Natural killer cell (primary cell): ENCODE measurements at regions of chr17 and their contacts with region 1.

Region 1: DNA sequence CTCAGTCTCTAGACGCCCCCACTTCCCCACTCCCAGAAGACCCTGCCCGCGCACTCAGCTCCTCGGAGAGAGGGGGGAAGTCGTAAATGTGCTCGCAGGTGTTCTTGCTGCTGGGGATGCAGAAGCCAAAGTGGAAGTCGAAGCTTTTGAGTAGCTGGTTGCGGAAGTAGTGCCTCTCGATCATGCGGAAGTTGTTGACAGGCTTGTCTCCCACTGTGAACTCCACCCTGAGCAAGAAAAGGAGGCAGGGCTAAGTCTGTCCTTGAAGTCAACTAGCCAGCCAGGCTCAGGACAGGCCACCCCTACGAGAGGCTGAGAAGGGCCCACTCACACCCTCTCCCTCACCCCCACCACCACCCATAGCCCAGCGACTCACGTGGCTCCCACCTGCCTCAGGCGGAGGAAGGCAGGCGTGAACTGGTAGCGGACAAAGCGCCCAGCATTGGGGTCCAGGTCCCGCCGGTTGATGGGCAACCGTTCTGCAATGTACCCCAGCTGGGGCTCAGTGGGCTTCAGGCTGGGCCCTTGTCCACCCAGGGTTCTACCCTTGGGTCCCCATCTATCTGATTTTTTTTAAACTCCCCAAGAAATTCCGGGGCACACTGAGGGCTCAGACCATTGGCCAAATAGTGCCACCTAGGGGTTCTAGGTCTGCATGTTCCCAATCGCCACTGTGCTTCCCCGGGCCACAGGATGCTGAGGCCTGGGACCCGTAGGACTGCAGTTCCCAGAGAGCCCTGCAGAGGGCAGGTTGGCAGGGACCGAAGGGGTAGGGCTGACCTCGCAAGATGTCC is 4.6 kb downstream of the UNC119 start:
- DNase-seq: peak; percentile 63 to 77
- ATAC-seq: peak; percentile 56 to 71 (median 59)
- H3K4me3 ChIP-seq: no peak overlapping the region
- H3K4me3 Mint-ChIP-seq: peak overlapping the region; percentile 81
- H3K27ac ChIP-seq: peak overlapping the region; percentile 88
- H3K27ac Mint-ChIP-seq: peak overlapping the region; percentile 87 to 93
- H3K4me1 ChIP-seq: peaks cover 54% of the 10 kb centered on the region
- H3K4me1 Mint-ChIP-seq: peaks cover 38 to 52% of the 10 kb centered on the region in 2 donors
- H3K27me3 ChIP-seq: no peaks in the 10 kb centered on the region
- H3K27me3 Mint-ChIP-seq: no peaks in the 10 kb centered on the region
- CTCF ChIP-seq: peak; percentile 77

Region 2: DNA sequence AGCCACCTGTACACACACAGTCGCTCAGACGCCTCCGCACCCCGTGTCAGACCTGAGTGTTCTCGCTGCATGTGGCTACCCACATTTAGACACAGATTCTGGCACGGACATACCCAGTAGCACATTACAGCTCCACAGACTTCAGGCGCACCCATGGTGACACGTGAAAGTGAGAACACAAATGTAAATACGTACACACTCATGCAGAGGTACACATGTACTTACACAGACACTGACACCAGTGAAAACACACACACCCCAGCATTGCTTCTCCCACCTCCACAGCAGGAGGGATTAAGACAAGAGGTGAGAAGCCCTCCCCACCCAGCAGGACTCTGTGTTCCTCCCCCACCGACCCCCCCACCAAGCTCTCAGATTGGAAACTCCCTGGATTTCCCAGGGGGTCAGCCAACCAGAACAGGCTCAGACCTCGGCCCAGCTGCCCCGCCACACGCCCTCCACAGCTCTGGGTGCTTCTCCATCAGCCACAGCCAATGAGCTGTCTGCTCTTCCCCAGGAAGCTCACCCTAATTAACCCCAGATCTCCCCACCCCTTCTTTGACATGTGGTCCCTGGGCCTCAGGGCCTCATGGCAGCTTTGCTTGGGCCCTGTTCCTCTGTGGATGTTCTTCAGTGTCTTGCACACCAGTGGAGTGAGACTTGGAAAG is 47.0 kb before region 1 on chr17:
- intact Hi-C with region 1: no loop called
- DNase-seq: no peak
- ATAC-seq: peak in 1 of 3 donors; percentile 48
- H3K4me3 ChIP-seq: no peak overlapping the region
- H3K4me3 Mint-ChIP-seq: no peak overlapping the region
- H3K27ac ChIP-seq: no peak overlapping the region
- H3K27ac Mint-ChIP-seq: no peak overlapping the region
- H3K4me1 ChIP-seq: no peaks in the 10 kb centered on the region
- H3K4me1 Mint-ChIP-seq: no peaks in the 10 kb centered on the region
- H3K27me3 ChIP-seq: no peaks in the 10 kb centered on the region
- H3K27me3 Mint-ChIP-seq: peaks cover 8 to 11% of the 10 kb centered on the region in 2 donors
- CTCF ChIP-seq: no peak

Region 3: DNA sequence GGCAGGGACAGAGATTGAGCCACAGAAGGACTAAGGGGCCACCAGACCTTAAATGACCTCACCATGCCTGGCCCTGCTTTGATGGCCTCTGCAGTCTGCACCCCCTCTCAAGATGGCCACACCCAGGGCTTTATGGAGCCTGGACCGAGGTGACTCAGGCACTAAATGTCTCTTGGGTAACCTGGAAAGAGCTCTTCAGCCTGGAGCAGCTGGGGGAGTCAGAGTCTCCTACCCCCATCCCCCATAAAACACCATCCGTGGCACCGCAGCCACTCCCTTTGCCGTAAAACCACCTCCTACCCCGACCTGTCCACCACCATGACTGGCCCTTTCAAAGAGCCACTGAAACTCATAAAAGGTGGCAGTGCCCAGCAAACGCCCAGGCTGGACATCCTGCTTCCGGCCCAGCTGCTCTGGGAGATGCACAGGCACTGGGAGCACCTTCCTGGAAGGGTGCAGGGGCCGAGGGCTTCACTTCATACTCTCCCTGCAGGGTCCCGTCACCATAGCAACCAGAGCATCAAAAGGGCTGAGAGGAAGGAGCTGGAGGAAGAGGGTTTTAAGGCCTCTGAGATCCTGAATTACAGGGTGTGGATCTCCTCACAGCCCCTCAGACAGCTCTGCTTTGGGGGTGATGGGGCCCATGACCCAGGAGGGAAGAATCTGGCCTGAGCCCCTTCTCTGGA is 19.3 kb before region 1 on chr17:
- intact Hi-C with region 1: no loop called
- DNase-seq: no peak
- ATAC-seq: no peak
- H3K4me3 ChIP-seq: no peak overlapping the region
- H3K4me3 Mint-ChIP-seq: no peak overlapping the region
- H3K27ac ChIP-seq: no peak overlapping the region
- H3K27ac Mint-ChIP-seq: no peak overlapping the region
- H3K4me1 ChIP-seq: no peaks in the 10 kb centered on the region
- H3K4me1 Mint-ChIP-seq: no peaks in the 10 kb centered on the region
- H3K27me3 ChIP-seq: no peaks in the 10 kb centered on the region
- H3K27me3 Mint-ChIP-seq: peaks cover 0 to 2% of the 10 kb centered on the region in 2 donors
- CTCF ChIP-seq: no peak

Region 4: GRCh38 chr17:28571255-28572122 is 23.7 kb after region 1 on chr17 and contains the start of gene PIGS:
- intact Hi-C with region 1: loop called (anchors 2 kb)
- DNase-seq: peak; percentile 88 to 94
- ATAC-seq: peak; percentile 97 to 99 (median 97)
- H3K4me3 ChIP-seq: peak within 1 kb of the TSS; percentile 93
- H3K4me3 Mint-ChIP-seq: peak within 1 kb of the TSS; percentile 96
- H3K27ac ChIP-seq: peak within 1 kb of the TSS; percentile 88
- H3K27ac Mint-ChIP-seq: peak within 1 kb of the TSS; percentile 88 to 91
- H3K4me1 ChIP-seq: peaks cover 32% of the 10 kb centered on the region
- H3K4me1 Mint-ChIP-seq: peaks cover 54 to 57% of the 10 kb centered on the region in 2 donors
- H3K27me3 ChIP-seq: no peaks in the 10 kb centered on the region
- H3K27me3 Mint-ChIP-seq: no peaks in the 10 kb centered on the region
- CTCF ChIP-seq: no peak
- total RNA-seq, gene PIGS: 88.3 to 95.3 (median 92.3) TPM